ENCODE measurements at regions of chr1 and their contacts with region 1.

Region 1: GRCh38 chr1:205919026-205919746 is 24.1 kb downstream of the SLC26A9 start:
- DNase-seq: peak; percentile 60
- H3K4me3 ChIP-seq: no peak overlapping the region
- H3K27ac ChIP-seq: no peak overlapping the region
- H3K27me3 ChIP-seq: peaks cover 9% of the 10 kb centered on the region
- CTCF ChIP-seq: peak; percentile 93

Region 2: GRCh38 chr1:204446370-204447111 is 1472.6 kb before region 1 on chr1:
- CTCF ChIA-PET with region 1: no interaction called
- POLR2A ChIA-PET with region 1: no interaction called
- DNase-seq: no peak
- H3K4me3 ChIP-seq: no peak overlapping the region
- H3K27ac ChIP-seq: no peak overlapping the region
- H3K27me3 ChIP-seq: no peaks in the 10 kb centered on the region
- CTCF ChIP-seq: peak; percentile 81

Region 3: DNA sequence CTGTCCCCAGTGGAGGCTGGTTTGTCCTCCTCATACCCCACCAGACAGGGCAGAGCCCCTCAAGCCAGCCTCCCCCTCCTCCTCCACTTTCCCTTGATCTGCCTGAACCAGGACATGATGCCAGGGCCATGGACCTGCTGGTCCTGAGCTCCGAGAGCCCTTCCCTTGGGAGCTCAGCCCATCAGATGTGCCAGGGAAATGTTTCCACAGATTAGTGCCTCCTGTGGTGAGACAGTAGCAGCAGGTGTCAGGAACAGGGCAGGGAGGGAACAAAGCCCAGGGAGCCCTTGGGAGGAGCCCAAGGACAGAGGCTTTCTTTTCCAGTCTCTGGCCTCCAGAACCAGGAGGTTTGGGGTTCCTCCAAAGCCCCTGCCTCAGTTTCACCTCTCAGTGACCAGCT is 91.6 kb before region 1 on chr1:
- CTCF ChIA-PET with region 1: no interaction called
- POLR2A ChIA-PET with region 1: no interaction called
- DNase-seq: no peak
- H3K4me3 ChIP-seq: no peak overlapping the region
- H3K27ac ChIP-seq: no peak overlapping the region
- H3K27me3 ChIP-seq: peaks cover 39% of the 10 kb centered on the region
- CTCF ChIP-seq: no peak

Region 4: DNA sequence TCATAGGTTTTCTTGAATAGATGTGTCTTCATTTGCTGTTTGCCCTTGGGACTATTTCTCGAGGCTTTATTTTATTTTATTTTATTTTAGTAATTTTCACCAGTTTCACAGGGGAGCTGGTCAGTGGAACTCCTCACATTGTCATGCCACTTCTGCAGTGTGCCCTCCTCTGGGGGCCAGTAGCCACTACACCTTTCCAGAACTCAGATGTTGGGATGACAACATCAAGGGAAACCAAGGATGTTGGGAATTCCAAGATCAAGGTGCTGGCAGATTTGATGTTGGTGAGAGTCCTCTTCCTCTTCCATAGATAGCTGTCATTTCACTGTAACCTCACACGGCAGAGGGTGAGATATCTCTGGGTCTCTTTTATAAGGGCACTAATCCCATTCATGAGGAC is 11.4 kb before region 1 on chr1:
- CTCF ChIA-PET with region 1: interaction called, 19 read pairs
- POLR2A ChIA-PET with region 1: no interaction called
- DNase-seq: no peak
- H3K4me3 ChIP-seq: no peak overlapping the region
- H3K27ac ChIP-seq: no peak overlapping the region
- H3K27me3 ChIP-seq: peaks cover 8% of the 10 kb centered on the region
- CTCF ChIP-seq: peak; percentile 67

Region 5: DNA sequence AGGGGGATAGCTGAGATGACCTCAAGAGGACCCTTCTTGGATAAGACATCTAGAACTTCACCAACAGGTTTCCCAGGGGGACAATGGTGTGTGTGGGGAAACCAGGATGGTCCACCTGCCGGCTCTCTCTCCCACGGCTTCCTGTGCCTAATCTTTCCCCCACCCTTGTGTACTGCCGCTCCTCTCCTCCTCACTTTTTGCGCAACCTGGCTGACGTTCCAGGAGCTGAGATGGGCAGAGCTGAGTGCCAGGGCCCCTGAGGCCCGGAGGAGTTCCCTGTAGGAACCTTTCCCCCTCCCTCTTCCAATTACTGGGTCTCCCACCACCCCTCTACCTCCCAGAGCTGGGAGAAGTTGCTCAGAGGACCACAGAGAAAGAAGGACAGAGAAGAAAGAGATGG is 17.1 kb after region 1 on chr1:
- CTCF ChIA-PET with region 1: interaction called, 11 read pairs
- POLR2A ChIA-PET with region 1: no interaction called
- DNase-seq: no peak
- H3K4me3 ChIP-seq: no peak overlapping the region
- H3K27ac ChIP-seq: no peak overlapping the region
- H3K27me3 ChIP-seq: peaks cover 10% of the 10 kb centered on the region
- CTCF ChIP-seq: no peak

Region 6: GRCh38 chr1:205950280-205950679 is 31.1 kb after region 1 on chr1:
- CTCF ChIA-PET with region 1: no interaction called
- POLR2A ChIA-PET with region 1: no interaction called
- DNase-seq: no peak
- H3K4me3 ChIP-seq: no peak overlapping the region
- H3K27ac ChIP-seq: no peak overlapping the region
- H3K27me3 ChIP-seq: peaks cover 47% of the 10 kb centered on the region
- CTCF ChIP-seq: no peak

Measured in AG04450 (cell line).